ENCODE measurements at regions of chr1 and their contacts with region 1.

Region 1: GRCh38 chr1:19251305-19252196 is at the starts of genes EMC1 and MRTO4:
- DNase-seq: peak; percentile 97
- ATAC-seq: peak; percentile 93
- H3K4me3 Mint-ChIP-seq: peak within 1 kb of the TSS; percentile 96
- H3K27ac Mint-ChIP-seq: peak within 1 kb of the TSS; percentile 92
- H3K4me1 Mint-ChIP-seq: peaks cover 32% of the 10 kb centered on the region
- H3K27me3 Mint-ChIP-seq: no peaks in the 10 kb centered on the region
- CTCF ChIP-seq: no peak
- total RNA-seq, gene EMC1: 40.0 and 42.7 TPM in 2 replicates
- total RNA-seq, gene MRTO4: 61.5 and 73.1 TPM in 2 replicates

Region 2: DNA sequence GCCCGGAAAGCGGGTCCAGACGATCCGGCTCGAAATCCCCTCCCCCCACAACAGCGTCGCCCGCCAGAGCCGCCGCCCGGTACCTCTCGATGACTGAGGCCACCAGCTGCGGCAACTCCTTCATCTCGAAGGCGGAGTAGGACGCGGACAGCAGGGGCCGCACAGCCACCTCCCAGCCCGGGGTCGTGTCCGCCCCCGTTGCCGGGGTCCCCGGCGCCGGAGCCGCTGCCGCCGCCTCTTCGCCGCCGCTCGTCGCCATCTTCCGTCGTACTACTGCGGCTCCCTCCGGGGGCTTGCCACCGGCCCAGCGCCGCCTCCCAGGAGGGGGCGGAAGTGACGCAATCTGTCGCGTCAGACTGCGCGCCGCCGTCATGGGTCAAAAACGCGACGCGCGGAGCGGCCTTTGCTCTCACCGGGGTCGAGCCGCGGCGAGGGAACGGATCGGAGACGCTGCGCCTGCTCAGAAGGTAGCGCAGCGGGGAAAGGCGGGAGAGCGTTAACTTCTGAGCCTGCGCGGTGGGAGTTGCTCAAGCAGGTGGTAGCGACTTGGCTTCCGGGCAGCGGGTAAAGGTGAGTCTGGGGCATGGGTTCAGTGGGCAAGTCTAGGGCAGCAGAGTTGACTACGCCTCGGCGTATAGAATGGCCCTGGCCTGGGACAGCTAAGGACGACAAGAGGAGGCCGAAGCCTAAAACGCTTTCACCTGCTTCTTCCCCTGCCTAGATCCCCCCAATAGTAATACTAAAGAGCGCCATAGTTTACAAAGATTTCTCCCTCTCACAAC is 41.4 kb before region 1 on chr1 and contains the start of gene UBR4:
- CTCF ChIA-PET with region 1: interaction called, 3 read pairs
- POLR2A ChIA-PET with region 1: interaction called, 22 read pairs
- intact Hi-C with region 1: loop called (anchors 1 kb)
- DNase-seq: peak; percentile 98
- ATAC-seq: peak; percentile 77
- H3K4me3 Mint-ChIP-seq: peak within 1 kb of the TSS; percentile 95
- H3K27ac Mint-ChIP-seq: peak within 1 kb of the TSS; percentile 97
- H3K4me1 Mint-ChIP-seq: peaks cover 57% of the 10 kb centered on the region
- H3K27me3 Mint-ChIP-seq: no peaks in the 10 kb centered on the region
- CTCF ChIP-seq: no peak
- total RNA-seq, gene UBR4: 221 and 262 TPM in 2 replicates

Region 3: DNA sequence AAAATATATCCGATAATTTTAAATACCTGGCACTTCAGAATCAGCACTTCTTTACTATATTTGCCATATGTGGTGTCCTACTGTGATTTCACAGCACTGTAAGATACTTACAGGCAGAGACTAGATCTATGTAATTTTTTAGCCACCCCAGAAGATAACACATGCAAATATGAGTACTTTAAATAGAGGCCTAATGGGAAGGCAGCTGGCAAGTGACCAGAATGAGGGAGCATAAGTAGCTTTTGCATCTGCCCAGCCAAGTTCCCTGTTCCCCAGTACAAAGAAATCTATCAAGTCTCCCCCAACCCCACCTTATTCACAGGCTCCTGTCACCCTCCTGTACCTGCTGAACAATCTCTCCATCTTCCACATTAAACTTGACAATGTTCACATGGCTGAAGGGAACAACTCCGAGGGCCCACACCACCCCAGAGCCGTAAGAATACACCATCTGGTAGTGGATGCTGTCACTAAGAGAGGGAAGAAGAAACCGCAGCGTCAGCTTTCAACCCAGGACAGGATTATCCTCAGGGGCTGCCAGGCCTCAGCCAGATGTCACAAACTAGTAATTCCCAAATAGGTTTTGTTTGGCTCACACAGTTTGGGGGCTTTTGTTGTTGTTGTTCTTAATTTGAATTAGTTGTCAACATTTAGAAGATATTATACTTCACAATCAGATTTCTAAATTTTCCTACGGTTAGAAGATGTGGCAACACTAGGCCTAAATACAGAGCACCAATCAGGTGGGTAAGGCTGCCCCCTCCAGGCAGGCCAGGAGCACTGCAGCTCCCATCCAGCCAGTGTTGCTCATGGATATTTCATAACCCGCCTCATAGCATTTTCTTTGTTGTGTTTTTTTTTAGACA is 10.6 kb before region 1 on chr1:
- CTCF ChIA-PET with region 1: interaction called, 10 read pairs
- POLR2A ChIA-PET with region 1: interaction called, 9 read pairs
- intact Hi-C with region 1: no loop called
- DNase-seq: peak; percentile 52
- ATAC-seq: peak; percentile 99
- H3K4me3 Mint-ChIP-seq: no peak overlapping the region
- H3K27ac Mint-ChIP-seq: no peak overlapping the region
- H3K4me1 Mint-ChIP-seq: no peaks in the 10 kb centered on the region
- H3K27me3 Mint-ChIP-seq: no peaks in the 10 kb centered on the region
- CTCF ChIP-seq: peak; percentile 95

Region 4: GRCh38 chr1:19273106-19273843 is 21.7 kb after region 1 on chr1:
- CTCF ChIA-PET with region 1: no interaction called
- POLR2A ChIA-PET with region 1: no interaction called
- intact Hi-C with region 1: no loop called
- DNase-seq: no peak
- ATAC-seq: no peak
- H3K4me3 Mint-ChIP-seq: no peak overlapping the region
- H3K27ac Mint-ChIP-seq: no peak overlapping the region
- H3K4me1 Mint-ChIP-seq: no peaks in the 10 kb centered on the region
- H3K27me3 Mint-ChIP-seq: peaks cover 14% of the 10 kb centered on the region
- CTCF ChIP-seq: no peak

Region 5: DNA sequence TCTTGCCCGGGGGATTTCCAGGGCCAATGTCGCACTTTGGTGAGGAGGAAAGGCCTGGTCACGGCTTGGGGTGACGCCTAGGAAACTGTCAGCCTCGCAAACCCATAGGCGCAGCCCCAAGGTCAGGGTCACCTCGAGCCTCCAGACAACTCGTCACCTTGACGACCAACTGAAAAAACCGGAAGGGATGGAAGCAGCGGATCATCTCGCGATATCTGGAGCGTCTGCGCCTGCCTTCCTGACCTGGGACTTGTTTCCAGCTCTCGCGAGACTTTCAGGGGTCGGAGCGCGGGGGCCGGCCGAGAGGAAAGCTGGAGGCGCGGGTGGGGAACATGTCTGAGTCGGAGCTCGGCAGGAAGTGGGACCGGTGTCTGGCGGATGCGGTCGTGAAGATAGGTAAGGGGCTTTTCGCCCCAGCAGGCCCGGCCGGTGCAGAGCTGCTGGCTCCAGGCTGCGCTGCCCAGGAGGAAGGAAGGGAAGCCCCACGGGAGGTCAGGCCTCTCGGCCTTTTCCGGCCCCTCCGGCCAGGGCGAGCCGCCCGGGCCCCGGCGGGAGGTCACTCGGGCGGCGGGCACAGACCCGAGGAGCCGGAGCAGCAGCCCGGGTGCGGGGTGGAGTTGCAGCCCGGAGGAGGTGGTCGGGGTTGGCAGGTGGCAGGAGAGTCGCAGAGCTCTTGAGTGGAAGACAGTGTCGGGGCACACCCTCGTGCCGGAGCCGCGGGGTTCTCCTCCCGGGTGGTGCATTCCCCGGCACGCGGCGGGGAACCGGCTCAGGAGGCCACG is 345.4 kb after region 1 on chr1:
- CTCF ChIA-PET with region 1: no interaction called
- POLR2A ChIA-PET with region 1: interaction called, 6 read pairs
- intact Hi-C with region 1: loop called (anchors 1 kb)
- DNase-seq: peak; percentile 86
- ATAC-seq: peak; percentile 91
- H3K4me3 Mint-ChIP-seq: peak overlapping the region; percentile 100
- H3K27ac Mint-ChIP-seq: peak overlapping the region; percentile 99
- H3K4me1 Mint-ChIP-seq: peaks cover 48% of the 10 kb centered on the region
- H3K27me3 Mint-ChIP-seq: no peaks in the 10 kb centered on the region
- CTCF ChIP-seq: no peak